ENCODE measurements at regions of chr12 and their contacts with region 1.

Region 1: GRCh38 chr12:751192-751998 is 984 bp upstream of the WNK1 start:
- DNase-seq: peak; percentile 94
- ATAC-seq: peak; percentile 60
- H3K4me3 ChIP-seq: peak overlapping the region; percentile 75
- H3K27ac ChIP-seq: peak overlapping the region; percentile 79
- H3K4me1 ChIP-seq: no peaks in the 10 kb centered on the region; the same call in 1 of the 2 replicates
- H3K27me3 ChIP-seq: no peaks in the 10 kb centered on the region
- CTCF ChIP-seq: peak; percentile 73 to 84 (median 78)
- EP300 ChIP-seq: no peak
- POLR2A ChIP-seq: peak; percentile 89
- RAD21 ChIP-seq: peak; percentile 76

Region 2: DNA sequence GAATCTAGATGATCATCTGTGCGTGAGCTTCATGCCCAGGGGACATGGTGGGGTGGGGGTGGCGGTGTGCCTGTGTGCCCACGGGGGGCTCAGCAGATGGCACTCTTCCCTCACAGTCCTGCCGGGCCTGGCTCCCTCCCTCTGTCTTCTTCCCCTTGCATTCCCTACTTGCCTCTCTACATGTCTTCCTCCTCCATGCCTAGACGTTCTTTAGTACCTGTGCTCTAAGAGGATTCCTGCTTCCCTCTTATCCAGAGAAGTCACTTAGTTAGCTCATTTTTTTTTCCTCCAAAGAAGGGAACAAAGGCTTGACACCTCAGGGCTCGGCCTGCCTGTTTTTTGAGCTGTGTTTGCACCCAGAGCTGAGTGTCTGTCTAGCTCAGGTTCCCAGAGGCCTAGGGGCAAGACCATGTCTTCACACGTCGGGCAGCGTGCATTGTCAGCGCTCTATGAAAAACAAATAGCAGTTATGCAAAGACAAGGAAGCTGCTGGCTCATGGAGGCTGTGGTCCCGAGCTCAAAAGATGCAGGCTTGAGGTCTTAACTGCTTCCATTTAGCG is 136.9 kb before region 1 on chr12:
- CTCF ChIA-PET with region 1: interaction called, 60 read pairs
- POLR2A ChIA-PET with region 1: interaction called, 18 read pairs
- RAD21 ChIA-PET with region 1: interaction called, 65 read pairs
- SMC1A ChIA-PET with region 1: interaction called, 71 read pairs
- in situ Hi-C with region 1: no loop called
- intact Hi-C with region 1: loop called (anchors 1 kb)
- DNase-seq: no peak
- ATAC-seq: peak; percentile 78
- H3K4me3 ChIP-seq: no peak overlapping the region
- H3K27ac ChIP-seq: no peak overlapping the region
- H3K4me1 ChIP-seq: peaks cover 10% of the 10 kb centered on the region
- H3K27me3 ChIP-seq: no peaks in the 10 kb centered on the region
- CTCF ChIP-seq: peak; percentile 61 to 86 (median 63)
- EP300 ChIP-seq: no peak
- POLR2A ChIP-seq: no peak
- RAD21 ChIP-seq: peak; percentile 75

Region 3: DNA sequence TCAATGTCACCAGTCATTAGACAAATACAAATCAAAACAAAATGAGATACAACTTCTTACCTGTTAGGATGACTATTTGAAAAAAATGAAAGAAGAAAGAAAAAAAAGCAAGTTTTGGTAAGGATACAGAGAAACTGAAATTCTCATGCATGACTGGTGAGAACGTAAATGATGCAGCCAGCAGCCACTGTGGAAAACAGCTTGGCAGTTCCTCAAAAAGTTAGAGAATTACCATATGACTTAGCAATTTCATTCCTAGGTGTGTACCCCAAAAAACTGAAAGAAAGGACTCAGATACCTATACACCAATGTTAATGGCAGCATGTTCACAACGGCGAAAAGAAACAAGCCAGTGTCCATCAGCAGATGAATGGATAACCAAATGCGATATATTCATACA is 114.8 kb before region 1 on chr12:
- CTCF ChIA-PET with region 1: interaction called, 14 read pairs
- POLR2A ChIA-PET with region 1: interaction called, 19 read pairs
- RAD21 ChIA-PET with region 1: interaction called, 46 read pairs
- SMC1A ChIA-PET with region 1: interaction called, 36 read pairs
- in situ Hi-C with region 1: no loop called
- intact Hi-C with region 1: no loop called
- DNase-seq: no peak
- ATAC-seq: peak; percentile 26
- H3K4me3 ChIP-seq: no peak overlapping the region
- H3K27ac ChIP-seq: peak overlapping the region; percentile 42
- H3K4me1 ChIP-seq: peaks cover 27% of the 10 kb centered on the region
- H3K27me3 ChIP-seq: no peaks in the 10 kb centered on the region
- CTCF ChIP-seq: no peak
- EP300 ChIP-seq: no peak
- POLR2A ChIP-seq: no peak
- RAD21 ChIP-seq: no peak

Region 4: GRCh38 chr12:662566-663292 is 88.7 kb before region 1 on chr12:
- CTCF ChIA-PET with region 1: interaction called, 63 read pairs
- POLR2A ChIA-PET with region 1: interaction called, 72 read pairs
- RAD21 ChIA-PET with region 1: interaction called, 396 read pairs
- SMC1A ChIA-PET with region 1: interaction called, 87 read pairs
- in situ Hi-C with region 1: no loop called
- intact Hi-C with region 1: no loop called
- DNase-seq: no peak
- ATAC-seq: no peak
- H3K4me3 ChIP-seq: no peak overlapping the region
- H3K27ac ChIP-seq: peak overlapping the region; percentile 17; the same call in 1 of the 2 replicates
- H3K4me1 ChIP-seq: peaks cover 60% of the 10 kb centered on the region
- H3K27me3 ChIP-seq: no peaks in the 10 kb centered on the region
- CTCF ChIP-seq: no peak
- EP300 ChIP-seq: no peak
- POLR2A ChIP-seq: no peak
- RAD21 ChIP-seq: no peak

Region 5: GRCh38 chr12:716506-716905 is 34.9 kb before region 1 on chr12:
- CTCF ChIA-PET with region 1: interaction called, 8 read pairs
- POLR2A ChIA-PET with region 1: interaction called, 38 read pairs
- RAD21 ChIA-PET with region 1: interaction called, 35 read pairs
- SMC1A ChIA-PET with region 1: interaction called, 72 read pairs
- in situ Hi-C with region 1: no loop called
- intact Hi-C with region 1: loop called (anchors 2 kb)
- DNase-seq: no peak
- ATAC-seq: no peak
- H3K4me3 ChIP-seq: no peak overlapping the region
- H3K27ac ChIP-seq: no peak overlapping the region
- H3K4me1 ChIP-seq: peaks cover 24% of the 10 kb centered on the region
- H3K27me3 ChIP-seq: no peaks in the 10 kb centered on the region
- CTCF ChIP-seq: no peak
- EP300 ChIP-seq: no peak
- POLR2A ChIP-seq: no peak
- RAD21 ChIP-seq: no peak

Region 6: GRCh38 chr12:779745-780734 is 28.6 kb after region 1 on chr12:
- CTCF ChIA-PET with region 1: interaction called, 7 read pairs
- POLR2A ChIA-PET with region 1: interaction called, 3 read pairs
- RAD21 ChIA-PET with region 1: interaction called, 7 read pairs
- SMC1A ChIA-PET with region 1: interaction called, 42 read pairs
- in situ Hi-C with region 1: no loop called
- intact Hi-C with region 1: no loop called
- DNase-seq: no peak
- ATAC-seq: peak; percentile 50
- H3K4me3 ChIP-seq: peak overlapping the region; percentile 50
- H3K27ac ChIP-seq: peak overlapping the region; percentile 46
- H3K4me1 ChIP-seq: peaks cover 22% of the 10 kb centered on the region
- H3K27me3 ChIP-seq: no peaks in the 10 kb centered on the region
- CTCF ChIP-seq: no peak
- EP300 ChIP-seq: no peak
- POLR2A ChIP-seq: no peak
- RAD21 ChIP-seq: no peak

Region 7: DNA sequence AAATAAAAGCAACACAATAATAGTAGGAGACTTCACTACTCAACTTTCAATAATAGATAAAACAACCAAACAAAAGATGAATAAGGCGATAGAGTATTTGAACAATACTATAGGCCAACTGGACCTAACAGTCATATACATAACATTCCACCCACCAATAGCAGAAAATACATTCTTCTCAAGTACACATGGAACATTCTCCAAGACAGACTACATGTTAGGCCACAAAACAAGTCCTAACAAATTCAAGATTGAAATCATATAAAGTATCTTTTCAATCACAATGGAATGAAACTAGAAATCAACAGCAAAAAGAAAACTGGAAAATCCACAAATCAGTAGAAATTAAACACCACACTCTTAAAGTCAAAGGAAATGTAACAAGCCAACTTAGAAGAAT is 169.3 kb after region 1 on chr12:
- CTCF ChIA-PET with region 1: no interaction called
- POLR2A ChIA-PET with region 1: no interaction called
- RAD21 ChIA-PET with region 1: no interaction called
- SMC1A ChIA-PET with region 1: no interaction called
- in situ Hi-C with region 1: no loop called
- intact Hi-C with region 1: no loop called
- DNase-seq: no peak
- ATAC-seq: no peak
- H3K4me3 ChIP-seq: no peak overlapping the region
- H3K27ac ChIP-seq: no peak overlapping the region
- H3K4me1 ChIP-seq: no peaks in the 10 kb centered on the region
- H3K27me3 ChIP-seq: no peaks in the 10 kb centered on the region
- CTCF ChIP-seq: no peak
- EP300 ChIP-seq: no peak
- POLR2A ChIP-seq: no peak
- RAD21 ChIP-seq: no peak

Region 8: DNA sequence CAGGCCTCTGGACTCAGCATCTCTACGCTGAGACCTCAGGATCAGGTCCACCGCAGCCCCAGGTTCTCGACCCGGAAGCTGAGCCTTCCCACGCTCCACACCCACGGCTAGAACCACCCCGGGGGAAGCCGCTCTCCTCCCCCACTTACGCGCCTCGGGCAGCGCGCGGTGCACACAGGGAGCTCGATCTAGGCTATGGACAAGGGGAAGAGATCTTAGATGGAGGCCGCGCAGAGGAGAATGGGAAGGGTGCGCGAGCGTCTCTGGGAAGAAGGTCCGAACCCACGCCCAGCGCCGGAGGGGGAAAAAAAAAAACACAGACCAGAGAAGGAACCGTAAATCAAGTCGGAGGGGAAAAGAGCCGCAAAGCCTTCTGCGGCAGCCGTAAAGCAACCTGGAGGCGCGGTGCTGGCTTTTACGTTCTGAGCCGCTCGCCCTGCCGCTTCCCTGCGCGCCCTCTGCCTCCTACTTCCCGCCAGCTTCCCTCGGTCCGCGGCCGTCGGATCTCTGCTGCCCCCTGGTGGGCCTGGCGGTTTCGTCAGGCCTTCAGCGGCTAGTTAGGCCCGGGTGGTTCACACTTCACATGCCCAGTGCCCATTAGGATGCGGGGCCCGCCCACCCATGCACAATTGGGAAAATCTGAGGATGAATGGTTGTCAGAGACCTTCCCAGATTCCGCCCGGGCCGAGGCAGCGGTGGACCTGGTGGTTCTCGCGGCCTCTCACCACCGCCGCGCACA is 198.2 kb after region 1 on chr12 and contains the start of gene RAD52:
- CTCF ChIA-PET with region 1: interaction called, 4 read pairs
- POLR2A ChIA-PET with region 1: interaction called, 5 read pairs
- RAD21 ChIA-PET with region 1: interaction called, 13 read pairs
- SMC1A ChIA-PET with region 1: no interaction called
- in situ Hi-C with region 1: no loop called
- intact Hi-C with region 1: no loop called
- DNase-seq: peak; percentile 96
- ATAC-seq: peak; percentile 91
- H3K4me3 ChIP-seq: peak within 1 kb of the TSS; percentile 91
- H3K27ac ChIP-seq: peak within 1 kb of the TSS; percentile 85
- H3K4me1 ChIP-seq: peaks cover 6% of the 10 kb centered on the region
- H3K27me3 ChIP-seq: no peaks in the 10 kb centered on the region
- CTCF ChIP-seq: peak; percentile 91 to 93 (median 93)
- EP300 ChIP-seq: peak in 1 of 2 experiments; percentile 25; a peak in 2 of 4 replicates
- POLR2A ChIP-seq: peak; percentile 89
- RAD21 ChIP-seq: peak; percentile 90
- polyA plus RNA-seq, gene RAD52: 2.0 to 2.9 TPM